ENCODE measurements at regions of chr4 and their contacts with region 1.

Region 1: DNA sequence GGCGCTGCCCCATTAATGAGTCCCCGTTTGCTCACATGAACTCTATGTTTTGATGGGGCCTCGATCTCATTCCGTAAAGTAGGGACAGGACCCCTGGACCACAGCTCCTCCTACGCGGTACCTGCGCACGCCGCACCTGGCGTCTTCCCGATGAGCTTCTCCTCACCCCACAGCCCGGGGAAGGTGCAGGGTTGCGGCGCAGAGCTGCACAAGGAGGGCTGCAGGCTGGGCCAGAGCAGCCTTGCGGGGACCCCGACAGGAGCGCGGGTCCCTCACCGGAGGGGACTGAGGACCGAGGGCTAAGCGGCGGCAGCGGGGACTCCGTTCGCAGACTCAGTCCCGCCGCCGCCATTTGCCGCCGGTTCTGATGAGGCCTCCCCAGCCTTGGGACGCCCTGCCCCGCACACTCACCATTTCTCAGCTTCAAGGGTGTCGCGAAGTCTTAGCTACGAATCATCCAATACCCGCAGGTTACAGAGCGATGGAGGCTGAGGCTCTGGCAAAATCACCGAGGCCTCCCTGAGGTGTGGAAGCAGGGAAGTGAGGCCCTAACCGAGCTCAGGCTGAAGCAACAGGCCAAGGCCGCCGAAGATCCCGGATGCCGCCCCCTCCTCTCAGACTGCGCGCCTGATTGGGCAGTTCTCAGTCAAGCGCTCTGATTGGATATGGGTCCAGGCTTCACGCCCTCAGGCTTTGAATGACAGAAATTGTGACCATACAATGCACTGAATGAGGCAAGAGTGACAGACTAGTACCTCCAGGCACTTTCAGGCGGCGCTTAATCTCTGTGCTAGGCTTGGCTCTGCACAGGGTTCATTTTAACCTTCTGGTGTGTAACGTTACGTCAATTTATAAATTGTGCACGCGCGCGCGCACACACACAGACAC is 25.1 kb downstream of the ZNF721 start:
- DNase-seq: peak; percentile 95 to 97 (median 97)
- H3K4me3 ChIP-seq: peak overlapping the region; percentile 59 to 85 (median 72)
- H3K4me3 Mint-ChIP-seq: peak overlapping the region; percentile 93 to 98
- H3K27ac ChIP-seq: peak overlapping the region; percentile 67 to 89
- H3K27ac Mint-ChIP-seq: peak overlapping the region; percentile 93 to 99 (median 97)
- H3K4me1 ChIP-seq: peaks cover 22 to 25% of the 10 kb centered on the region in 2 donors
- H3K4me1 Mint-ChIP-seq: peaks cover 42% of the 10 kb centered on the region
- H3K27me3 ChIP-seq: no peaks in the 10 kb centered on the region
- H3K27me3 Mint-ChIP-seq: no peaks in the 10 kb centered on the region
- CTCF ChIP-seq: no peak

Region 2: GRCh38 chr4:242121-242848 is 231.5 kb before region 1 on chr4:
- intact Hi-C with region 1: loop called in 1 of 2 experiments (anchors 10 kb)
- DNase-seq: peak; percentile 53 to 75 (median 62)
- H3K4me3 ChIP-seq: peak overlapping the region; percentile 42 to 92 (median 74)
- H3K4me3 Mint-ChIP-seq: peak overlapping the region; percentile 86 to 93
- H3K27ac ChIP-seq: no peak overlapping the region
- H3K27ac Mint-ChIP-seq: peak overlapping the region in 3 of 7 donors; percentile 49 to 87 (median 51)
- H3K4me1 ChIP-seq: peaks cover 7 to 8% of the 10 kb centered on the region in 2 donors
- H3K4me1 Mint-ChIP-seq: peaks cover 12% of the 10 kb centered on the region
- H3K27me3 ChIP-seq: no peaks in the 10 kb centered on the region
- H3K27me3 Mint-ChIP-seq: peaks cover 0 to 1% (median 0%) of the 10 kb centered on the region in 3 donors
- CTCF ChIP-seq: peak; percentile 83

Region 3: GRCh38 chr4:337143-337931 is 136.5 kb before region 1 on chr4 and contains the start of gene ZNF141:
- intact Hi-C with region 1: loop called (anchors 5 to 10 kb)
- DNase-seq: peak; percentile 90 to 95 (median 93)
- H3K4me3 ChIP-seq: peak within 1 kb of the TSS; percentile 63 to 93 (median 76)
- H3K4me3 Mint-ChIP-seq: peak within 1 kb of the TSS; percentile 99
- H3K27ac ChIP-seq: peak within 1 kb of the TSS; percentile 85 to 95
- H3K27ac Mint-ChIP-seq: peak within 1 kb of the TSS; percentile 96 to 99 (median 97)
- H3K4me1 ChIP-seq: peaks cover 14 to 26% of the 10 kb centered on the region in 2 donors
- H3K4me1 Mint-ChIP-seq: peaks cover 20% of the 10 kb centered on the region
- H3K27me3 ChIP-seq: peaks cover 0 to 3% of the 10 kb centered on the region in 2 donors
- H3K27me3 Mint-ChIP-seq: peaks cover 2 to 4% (median 2%) of the 10 kb centered on the region in 3 donors
- CTCF ChIP-seq: no peak
- polyA plus RNA-seq, gene ZNF141: 2.5 to 4.2 (median 2.7) TPM

Region 4: GRCh38 chr4:498328-498904 is 24.6 kb after region 1 on chr4:
- intact Hi-C with region 1: loop called (anchors 2 kb)
- DNase-seq: no peak
- H3K4me3 ChIP-seq: peak overlapping the region; percentile 84 to 97 (median 89)
- H3K4me3 Mint-ChIP-seq: peak overlapping the region; percentile 93 to 94
- H3K27ac ChIP-seq: peak overlapping the region; percentile 71 to 92
- H3K27ac Mint-ChIP-seq: peak overlapping the region; percentile 90 to 98 (median 97)
- H3K4me1 ChIP-seq: peaks cover 10 to 15% of the 10 kb centered on the region in 2 donors
- H3K4me1 Mint-ChIP-seq: peaks cover 14% of the 10 kb centered on the region
- H3K27me3 ChIP-seq: no peaks in the 10 kb centered on the region
- H3K27me3 Mint-ChIP-seq: peaks cover 0 to 3% (median 0%) of the 10 kb centered on the region in 3 donors
- CTCF ChIP-seq: no peak

Measured in CD14-positive monocyte (primary cell).